Activated CD4-positive, alpha-beta memory T cell treated with anti-CD3 and anti-CD28 coated beads for 36 hours (primary cell): ENCODE measurements at regions of chr16 and their contacts with region 1.

Region 1: GRCh38 chr16:56700195-56700594 is 17.9 kb downstream of the MT1X start:
- DNase-seq: no peak
- H3K4me3 Mint-ChIP-seq: no peak overlapping the region
- H3K27ac Mint-ChIP-seq: no peak overlapping the region
- H3K4me1 Mint-ChIP-seq: peaks cover 7% of the 10 kb centered on the region
- H3K27me3 Mint-ChIP-seq: no peaks in the 10 kb centered on the region

Region 2: DNA sequence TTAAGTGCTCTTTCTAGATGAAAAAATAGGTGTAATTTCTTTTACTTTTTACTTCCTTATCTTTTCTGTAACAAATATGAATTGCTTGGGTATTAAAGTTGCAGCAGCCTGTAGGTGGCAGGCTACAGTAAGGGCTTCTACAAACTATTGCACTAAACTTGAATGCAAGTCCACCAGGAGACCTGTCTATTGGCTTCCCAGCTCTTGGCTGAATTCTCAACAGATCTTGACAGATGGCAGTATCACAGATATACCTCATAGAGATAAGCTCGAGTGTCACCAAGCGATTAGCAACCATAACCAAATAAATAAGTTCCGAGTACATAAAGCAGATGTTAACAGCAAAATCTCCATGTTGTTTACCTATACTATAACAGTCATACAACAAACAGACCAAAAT is 186.2 kb before region 1 on chr16:
- CTCF ChIA-PET with region 1: interaction called, 34 read pairs
- POLR2A ChIA-PET with region 1: no interaction called
- intact Hi-C with region 1: loop called (anchors 1 kb)
- DNase-seq: peak; percentile 57
- H3K4me3 Mint-ChIP-seq: no peak overlapping the region
- H3K27ac Mint-ChIP-seq: no peak overlapping the region
- H3K4me1 Mint-ChIP-seq: peaks cover 36% of the 10 kb centered on the region
- H3K27me3 Mint-ChIP-seq: no peaks in the 10 kb centered on the region

Region 3: DNA sequence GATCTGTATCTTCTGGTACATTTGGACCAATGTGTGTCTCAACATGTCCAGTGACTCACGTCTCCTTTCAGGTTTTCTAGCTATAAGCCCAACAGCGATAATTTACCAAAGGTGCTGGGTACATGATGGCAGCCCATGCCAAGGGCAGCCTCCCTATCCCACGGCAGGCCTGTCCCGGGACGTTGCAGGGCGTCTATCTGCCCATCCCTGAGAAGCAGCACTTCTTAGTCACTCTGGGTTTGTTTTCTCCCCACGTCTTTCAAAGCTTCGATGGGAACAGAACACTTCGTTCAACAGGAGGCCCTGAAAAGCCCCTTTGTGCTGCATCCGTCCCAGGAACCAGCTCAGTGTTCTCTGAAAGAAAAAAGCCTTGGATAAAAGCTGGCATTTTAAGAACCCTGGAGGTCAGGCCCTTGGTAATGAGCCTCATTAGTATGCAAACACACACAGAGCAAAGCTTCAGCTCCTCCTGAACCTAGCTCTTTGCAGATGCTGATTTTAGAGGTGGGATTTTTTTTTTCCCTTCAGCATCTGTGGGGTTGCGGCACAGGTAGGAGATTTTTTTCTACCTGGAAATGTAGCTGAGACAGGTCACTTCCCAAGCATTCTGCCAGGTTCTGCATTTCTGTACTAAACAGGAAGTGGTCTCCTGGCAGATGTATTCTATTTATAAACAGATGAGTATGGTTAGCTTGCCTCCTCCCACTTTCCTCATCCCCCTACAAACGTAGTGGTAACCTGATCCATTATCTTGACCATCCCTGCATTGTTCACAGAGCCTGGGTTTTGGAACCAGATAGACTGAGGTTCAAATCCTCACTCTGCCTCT is 152.9 kb before region 1 on chr16:
- CTCF ChIA-PET with region 1: interaction called, 12 read pairs
- POLR2A ChIA-PET with region 1: no interaction called
- intact Hi-C with region 1: no loop called
- DNase-seq: no peak
- H3K4me3 Mint-ChIP-seq: no peak overlapping the region
- H3K27ac Mint-ChIP-seq: no peak overlapping the region
- H3K4me1 Mint-ChIP-seq: peaks cover 18% of the 10 kb centered on the region
- H3K27me3 Mint-ChIP-seq: no peaks in the 10 kb centered on the region

Region 4: DNA sequence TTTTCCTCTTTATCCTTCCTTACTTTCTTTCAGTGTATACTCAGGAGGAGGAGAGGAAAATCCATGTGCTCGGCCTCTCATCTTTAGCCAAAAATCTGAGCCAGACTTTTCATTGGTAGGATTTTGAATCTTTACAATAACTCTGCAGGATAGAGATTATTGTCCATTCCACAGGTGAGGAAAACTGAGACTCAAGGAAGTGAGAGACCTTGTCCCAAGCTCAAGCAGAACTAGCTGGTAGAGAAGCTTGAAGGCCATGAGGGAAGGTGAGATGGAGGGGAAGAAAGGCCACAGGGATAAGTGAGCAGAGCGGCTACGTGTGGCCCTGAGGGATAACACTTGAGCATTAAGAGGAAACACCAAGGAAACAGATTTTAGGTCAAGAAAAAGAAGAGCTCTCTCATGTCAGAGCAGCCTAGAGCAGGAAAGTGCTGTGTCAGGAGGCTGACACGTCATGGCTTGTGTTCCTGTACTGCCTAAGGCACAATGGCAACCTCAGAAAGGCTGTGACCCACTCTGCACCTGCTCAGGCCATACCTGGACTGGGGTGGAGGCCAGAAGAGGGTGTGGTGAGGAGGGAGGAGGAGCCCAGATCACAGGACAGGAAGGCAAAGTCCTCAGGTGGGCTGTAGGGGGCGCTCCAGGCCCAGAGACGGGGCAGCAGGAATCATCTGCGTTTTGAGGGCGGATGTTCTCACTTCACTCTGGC is 123.5 kb before region 1 on chr16:
- CTCF ChIA-PET with region 1: interaction called, 140 read pairs
- POLR2A ChIA-PET with region 1: no interaction called
- intact Hi-C with region 1: loop called (anchors 1 kb)
- DNase-seq: peak; percentile 94
- H3K4me3 Mint-ChIP-seq: no peak overlapping the region
- H3K27ac Mint-ChIP-seq: no peak overlapping the region
- H3K4me1 Mint-ChIP-seq: peaks cover 4% of the 10 kb centered on the region
- H3K27me3 Mint-ChIP-seq: no peaks in the 10 kb centered on the region

Region 5: GRCh38 chr16:56608043-56608875 is 91.9 kb before region 1 on chr16 and contains the start of gene MT2A:
- CTCF ChIA-PET with region 1: interaction called, 22 read pairs
- POLR2A ChIA-PET with region 1: no interaction called
- intact Hi-C with region 1: loop called (anchors 1 kb)
- DNase-seq: peak; percentile 95
- H3K4me3 Mint-ChIP-seq: peak within 1 kb of the TSS; percentile 81
- H3K27ac Mint-ChIP-seq: peak within 1 kb of the TSS; percentile 79
- H3K4me1 Mint-ChIP-seq: peaks cover 57% of the 10 kb centered on the region
- H3K27me3 Mint-ChIP-seq: no peaks in the 10 kb centered on the region
- total RNA-seq, gene MT2A: 102 to 105 TPM

Region 6: GRCh38 chr16:56643080-56643778 is 57.0 kb before region 1 on chr16:
- CTCF ChIA-PET with region 1: interaction called, 27 read pairs
- POLR2A ChIA-PET with region 1: no interaction called
- intact Hi-C with region 1: loop called (anchors 1 kb)
- DNase-seq: peak; percentile 89
- H3K4me3 Mint-ChIP-seq: peak overlapping the region; percentile 54
- H3K27ac Mint-ChIP-seq: no peak overlapping the region
- H3K4me1 Mint-ChIP-seq: peaks cover 18% of the 10 kb centered on the region
- H3K27me3 Mint-ChIP-seq: peaks cover 36% of the 10 kb centered on the region

Region 7: DNA sequence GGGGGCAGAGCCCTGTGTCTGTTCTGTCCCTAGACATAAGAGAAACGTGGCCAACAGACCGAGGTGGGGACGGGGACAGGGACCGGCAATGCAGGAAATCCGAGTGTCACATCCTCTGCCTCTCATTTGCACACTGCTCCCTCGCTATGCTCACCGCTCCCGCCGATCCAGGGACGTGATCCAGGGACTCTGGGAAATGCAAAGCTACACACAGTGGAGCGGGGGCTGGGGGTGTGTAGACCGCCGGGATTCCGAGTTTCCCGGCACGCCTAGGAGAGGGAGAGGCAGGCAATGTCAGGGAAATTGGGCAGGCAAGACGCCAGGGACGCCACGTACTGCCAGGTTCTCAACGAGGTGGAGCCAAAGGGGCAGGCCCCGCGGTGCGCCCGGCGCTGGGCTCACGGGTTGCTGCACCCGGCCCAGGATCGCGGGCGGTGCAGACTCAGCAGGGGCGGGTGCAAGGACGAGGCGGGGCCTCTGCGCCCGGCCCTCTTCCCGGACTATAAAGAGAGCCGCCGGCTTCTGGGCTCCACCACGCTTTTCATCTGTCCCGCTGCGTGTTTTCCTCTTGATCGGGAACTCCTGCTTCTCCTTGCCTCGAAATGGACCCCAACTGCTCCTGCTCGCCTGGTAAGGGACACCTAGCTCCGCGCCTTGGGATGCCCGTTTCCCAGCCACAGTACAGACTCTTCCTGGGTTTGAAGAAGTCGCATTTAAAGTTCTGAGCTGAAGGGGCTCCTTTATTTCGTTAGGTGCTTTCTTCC is 18.1 kb before region 1 on chr16 and contains the start of gene MT1X:
- CTCF ChIA-PET with region 1: interaction called, 24 read pairs
- POLR2A ChIA-PET with region 1: interaction called, 3 read pairs
- intact Hi-C with region 1: loop called (anchors 1 kb)
- DNase-seq: peak; percentile 96
- H3K4me3 Mint-ChIP-seq: peak within 1 kb of the TSS; percentile 91
- H3K27ac Mint-ChIP-seq: peak within 1 kb of the TSS; percentile 93
- H3K4me1 Mint-ChIP-seq: peaks cover 22% of the 10 kb centered on the region
- H3K27me3 Mint-ChIP-seq: no peaks in the 10 kb centered on the region
- total RNA-seq, gene MT1X: 31.9 to 38.1 TPM